Transverse colon (tissue), 4 donors: ENCODE measurements at regions of chr11 and their contacts with region 1.

Region 1: DNA sequence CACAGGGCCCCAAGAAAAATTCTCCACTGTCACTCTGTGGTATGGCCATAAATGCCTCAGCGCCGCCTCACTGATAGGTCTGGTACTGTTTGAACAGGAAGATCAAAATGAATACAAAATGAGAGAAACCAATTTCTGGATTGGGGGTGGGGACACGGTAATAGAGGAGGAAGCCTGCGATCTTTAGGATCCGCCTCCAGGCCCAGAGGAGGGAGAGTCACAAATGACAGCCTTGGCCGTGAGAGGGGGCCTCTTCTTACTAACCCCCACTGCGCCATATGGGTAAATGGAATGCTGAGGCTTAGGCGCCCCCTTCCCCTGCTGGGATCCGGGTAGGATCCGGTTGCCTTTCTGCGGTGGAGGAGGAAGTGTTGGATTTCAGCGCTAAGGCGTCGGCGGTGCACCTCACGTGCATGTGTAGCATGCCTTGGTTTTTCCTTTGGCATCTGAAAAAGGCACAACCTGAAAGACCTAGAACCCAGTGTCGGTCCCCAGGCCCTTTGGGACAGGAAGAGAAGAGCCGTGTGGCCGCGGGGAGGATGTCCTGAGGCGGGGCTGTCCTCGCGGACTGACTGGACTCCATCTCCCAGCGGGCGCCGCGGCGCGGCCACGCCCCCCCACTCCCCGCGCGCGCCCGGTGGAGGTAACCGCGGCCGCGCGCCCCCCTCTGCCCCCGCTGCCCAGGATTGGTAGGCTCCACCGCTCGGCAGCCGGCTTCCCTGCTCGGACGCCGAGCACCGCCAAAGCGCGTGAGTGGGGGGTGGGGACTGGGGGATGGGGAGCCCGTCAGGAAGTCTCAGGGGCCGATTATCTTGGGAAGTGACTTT is 718 bp upstream of the MADD start:
- DNase-seq: peak; percentile 91
- H3K4me3 ChIP-seq: peak overlapping the region; percentile 63 to 95 (median 88)
- H3K27ac ChIP-seq: peak overlapping the region; percentile 94 to 98 (median 97)
- H3K4me1 ChIP-seq: peaks cover 26 to 51% (median 41%) of the 10 kb centered on the region in 4 donors
- H3K27me3 ChIP-seq: no peaks in the 10 kb centered on the region
- CTCF ChIP-seq: peak in 4 of 5 experiments; percentile 24 to 60 (median 42)
- EP300 ChIP-seq: no peak
- POLR2A ChIP-seq: peak; percentile 62

Region 2: DNA sequence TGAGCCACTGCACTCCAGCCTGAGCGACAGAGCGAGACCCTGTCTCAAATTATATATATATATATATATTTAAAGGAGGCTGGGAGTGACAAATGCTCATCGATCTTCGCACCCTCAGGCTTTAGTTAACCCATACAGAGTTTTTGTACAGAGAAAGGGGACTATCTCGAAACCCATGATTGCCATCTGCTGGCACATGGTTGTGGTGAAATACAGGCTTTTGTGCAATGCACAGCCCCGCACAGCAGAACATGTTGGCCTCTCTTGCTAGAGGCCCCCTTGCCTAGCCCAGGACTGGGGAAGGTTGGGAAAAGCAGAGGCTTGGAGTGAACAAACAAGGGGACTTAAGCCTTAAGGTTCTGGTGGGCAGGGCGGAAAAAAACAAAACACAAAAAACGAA is 79.6 kb after region 1 on chr11:
- in situ Hi-C with region 1: no loop called
- intact Hi-C with region 1: loop called (anchors 10 kb)
- DNase-seq: no peak
- H3K4me3 ChIP-seq: no peak overlapping the region
- H3K27ac ChIP-seq: no peak overlapping the region
- H3K4me1 ChIP-seq: no peaks in the 10 kb centered on the region
- H3K27me3 ChIP-seq: no peaks in the 10 kb centered on the region
- CTCF ChIP-seq: no peak
- EP300 ChIP-seq: no peak
- POLR2A ChIP-seq: no peak

Region 3: GRCh38 chr11:47407746-47408590 is 138.8 kb after region 1 on chr11 and contains the start of gene SLC39A13:
- in situ Hi-C with region 1: no loop called
- intact Hi-C with region 1: no loop called
- DNase-seq: peak; percentile 94
- H3K4me3 ChIP-seq: peak within 1 kb of the TSS; percentile 71 to 82 (median 76)
- H3K27ac ChIP-seq: peak within 1 kb of the TSS; percentile 89 to 99 (median 93)
- H3K4me1 ChIP-seq: peaks cover 16 to 32% (median 27%) of the 10 kb centered on the region in 4 donors
- H3K27me3 ChIP-seq: no peaks in the 10 kb centered on the region
- CTCF ChIP-seq: peak; percentile 52 to 95 (median 69)
- EP300 ChIP-seq: no peak
- POLR2A ChIP-seq: peak; percentile 89
- total RNA-seq, gene SLC39A13: 19.9 to 56.9 (median 43.1) TPM